ENCODE measurements at regions of chr1 and their contacts with region 1.

Region 1: DNA sequence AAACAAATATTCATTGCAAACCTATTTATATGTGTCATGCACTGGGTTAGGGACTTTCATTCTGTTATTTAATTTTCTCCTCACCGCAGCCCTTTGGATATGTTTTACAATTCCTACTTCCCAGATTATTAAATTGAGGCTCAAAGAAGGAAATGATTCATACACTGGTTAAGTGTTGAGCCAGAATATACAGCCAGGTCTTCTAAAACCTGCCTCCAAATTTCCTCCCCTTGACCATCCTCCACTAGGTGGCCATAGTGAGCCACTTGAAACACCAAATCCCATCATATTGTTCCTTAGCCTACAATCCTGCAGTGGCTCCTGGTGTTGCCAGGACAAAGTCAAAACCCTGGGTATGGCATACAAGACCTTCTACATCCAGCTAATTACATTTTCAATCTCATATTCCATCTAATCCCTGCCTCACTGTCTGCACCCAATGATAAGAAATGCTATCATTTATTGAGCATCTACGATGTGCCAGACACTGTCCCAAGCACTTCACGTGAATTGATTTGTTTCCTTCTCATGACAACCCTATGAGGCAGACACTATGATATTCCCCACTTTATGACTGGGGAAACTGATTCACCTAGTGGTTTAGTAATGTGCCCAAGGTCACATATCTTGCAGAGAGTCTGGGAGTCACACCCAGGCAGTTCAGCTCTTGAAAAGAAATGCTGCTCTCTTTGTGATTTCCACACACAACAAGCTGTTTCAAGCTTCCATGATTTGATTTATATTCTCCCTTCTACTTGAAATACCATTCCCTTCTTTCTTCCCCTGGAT is 23.6 kb upstream of the KIRREL1 start:
- DNase-seq: peak; percentile 32
- ATAC-seq: no peak
- H3K4me3 Mint-ChIP-seq: no peak overlapping the region
- H3K27ac Mint-ChIP-seq: no peak overlapping the region
- H3K4me1 Mint-ChIP-seq: no peaks in the 10 kb centered on the region
- H3K27me3 Mint-ChIP-seq: no peaks in the 10 kb centered on the region
- CTCF ChIP-seq: peak; percentile 67

Region 2: DNA sequence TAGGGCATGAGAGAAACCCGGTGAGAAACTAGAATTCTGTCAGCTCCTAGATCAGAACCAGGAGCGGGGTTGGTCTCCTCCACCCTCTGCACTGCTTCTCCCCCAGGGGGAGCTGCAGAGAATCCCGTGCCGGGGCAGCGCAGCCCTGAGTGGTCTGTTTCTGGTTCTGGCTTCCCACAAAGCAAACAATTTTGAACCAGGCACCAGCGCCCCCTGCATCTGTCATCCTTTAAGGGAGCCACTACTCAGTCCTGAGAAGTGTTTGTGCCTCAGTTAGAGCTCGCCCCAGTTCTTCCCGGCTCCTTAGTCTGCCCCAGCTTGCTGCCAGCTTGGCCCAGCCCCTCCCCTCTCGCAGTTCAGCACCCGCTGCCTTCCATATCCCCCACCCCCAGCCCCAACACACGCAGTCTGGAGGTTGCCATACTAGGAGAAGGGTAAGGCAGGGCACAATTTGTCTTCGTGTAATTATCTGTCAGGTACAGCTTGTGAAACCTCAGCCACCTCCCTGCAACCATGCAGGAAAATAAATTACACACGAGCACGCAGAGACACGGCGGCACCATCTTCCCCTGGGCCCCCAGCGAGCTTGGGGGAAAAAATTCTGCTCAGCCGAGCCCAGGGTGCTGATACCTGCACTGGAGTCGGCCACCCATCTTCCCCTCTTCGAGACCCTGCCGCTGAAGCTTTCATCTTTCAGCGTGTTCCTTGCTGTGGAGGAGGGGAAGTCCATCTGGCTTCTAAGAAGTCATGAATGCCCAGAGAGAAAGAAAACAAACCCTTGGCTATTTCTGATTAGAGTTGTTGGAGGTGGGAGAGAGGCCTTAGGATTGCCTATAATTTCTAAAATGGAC is 148.2 kb after region 1 on chr1:
- CTCF ChIA-PET with region 1: interaction called, 103 read pairs
- POLR2A ChIA-PET with region 1: no interaction called
- intact Hi-C with region 1: no loop called
- DNase-seq: peak; percentile 67
- ATAC-seq: peak; percentile 75
- H3K4me3 Mint-ChIP-seq: peak overlapping the region; percentile 6
- H3K27ac Mint-ChIP-seq: no peak overlapping the region
- H3K4me1 Mint-ChIP-seq: peaks cover 11% of the 10 kb centered on the region
- H3K27me3 Mint-ChIP-seq: peaks cover 48% of the 10 kb centered on the region
- CTCF ChIP-seq: peak; percentile 59